Esophagus muscularis mucosa (tissue), 4 donors: ENCODE measurements at regions of chr7 and their contacts with region 1.

Region 1: GRCh38 chr7:31443457-31443856 is 70.4 kb upstream of the ITPRID1 start:
- DNase-seq: peak; percentile 39
- H3K4me3 ChIP-seq: no peak overlapping the region
- H3K27ac ChIP-seq: no peak overlapping the region
- H3K4me1 ChIP-seq: no peaks in the 10 kb centered on the region
- H3K27me3 ChIP-seq: no peaks in the 10 kb centered on the region
- CTCF ChIP-seq: peak; percentile 65 to 78 (median 72)
- EP300 ChIP-seq: no peak
- POLR2A ChIP-seq: no peak

Region 2: GRCh38 chr7:31384466-31384865 is 59.0 kb before region 1 on chr7:
- intact Hi-C with region 1: no loop called
- DNase-seq: no peak
- H3K4me3 ChIP-seq: no peak overlapping the region
- H3K27ac ChIP-seq: no peak overlapping the region
- H3K4me1 ChIP-seq: no peaks in the 10 kb centered on the region
- H3K27me3 ChIP-seq: no peaks in the 10 kb centered on the region
- CTCF ChIP-seq: no peak
- EP300 ChIP-seq: no peak
- POLR2A ChIP-seq: no peak

Region 3: GRCh38 chr7:31633894-31634494 is 190.5 kb after region 1 on chr7:
- intact Hi-C with region 1: loop called (anchors 5 kb)
- DNase-seq: no peak
- H3K4me3 ChIP-seq: no peak overlapping the region
- H3K27ac ChIP-seq: no peak overlapping the region
- H3K4me1 ChIP-seq: no peaks in the 10 kb centered on the region
- H3K27me3 ChIP-seq: no peaks in the 10 kb centered on the region
- CTCF ChIP-seq: peak; percentile 48 to 71 (median 63)
- EP300 ChIP-seq: no peak
- POLR2A ChIP-seq: no peak

Region 4: DNA sequence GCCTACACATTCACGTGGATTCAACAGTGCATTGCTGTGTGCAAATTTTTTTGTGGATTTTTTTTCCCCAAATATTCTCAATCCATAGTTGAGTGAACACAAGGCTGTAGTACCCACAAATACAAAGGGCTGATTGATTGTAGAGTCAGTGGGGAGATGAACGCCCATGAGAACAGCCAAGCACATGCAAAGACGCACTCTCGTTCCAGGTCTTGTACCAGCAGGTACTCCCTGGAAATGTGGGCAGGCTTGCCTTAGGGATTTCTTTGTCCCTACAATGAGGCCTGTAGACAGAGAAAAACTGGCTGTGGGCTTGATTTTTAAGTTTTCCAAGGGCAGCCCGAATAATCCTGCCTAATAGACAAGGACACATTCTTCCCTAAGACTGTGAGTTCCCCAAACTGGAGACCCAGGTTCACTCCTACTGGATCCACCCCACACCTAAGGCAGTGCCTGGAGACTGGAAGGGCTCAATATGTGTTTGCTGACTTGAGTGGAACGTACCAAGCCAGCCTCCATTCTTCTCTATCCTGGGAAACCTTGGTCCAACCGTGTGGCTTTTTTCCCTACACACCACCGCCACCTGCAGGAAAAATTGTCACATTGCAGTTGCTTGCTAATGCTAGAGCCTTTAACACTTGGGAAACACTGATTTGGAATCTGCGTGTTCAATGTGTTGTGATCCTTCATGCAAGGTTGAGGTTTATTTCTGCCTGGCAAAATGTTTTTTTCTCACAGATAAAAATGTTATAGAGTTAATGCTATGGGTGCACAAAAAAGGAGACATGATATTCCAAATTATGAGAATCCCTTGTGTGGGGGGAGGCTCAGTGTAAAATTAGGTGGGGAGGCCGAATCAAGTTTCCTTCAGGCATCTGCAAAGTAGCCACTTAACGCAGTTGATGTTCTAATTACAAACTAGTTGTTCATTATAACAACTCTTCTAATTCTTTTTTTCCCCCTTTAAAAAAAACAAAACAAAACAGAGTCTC is 292.8 kb after region 1 on chr7:
- intact Hi-C with region 1: loop called (anchors 10 kb)
- DNase-seq: no peak
- H3K4me3 ChIP-seq: no peak overlapping the region
- H3K27ac ChIP-seq: no peak overlapping the region
- H3K4me1 ChIP-seq: no peaks in the 10 kb centered on the region
- H3K27me3 ChIP-seq: no peaks in the 10 kb centered on the region
- CTCF ChIP-seq: peak; percentile 77 to 90 (median 79)
- EP300 ChIP-seq: no peak
- POLR2A ChIP-seq: no peak

Region 5: DNA sequence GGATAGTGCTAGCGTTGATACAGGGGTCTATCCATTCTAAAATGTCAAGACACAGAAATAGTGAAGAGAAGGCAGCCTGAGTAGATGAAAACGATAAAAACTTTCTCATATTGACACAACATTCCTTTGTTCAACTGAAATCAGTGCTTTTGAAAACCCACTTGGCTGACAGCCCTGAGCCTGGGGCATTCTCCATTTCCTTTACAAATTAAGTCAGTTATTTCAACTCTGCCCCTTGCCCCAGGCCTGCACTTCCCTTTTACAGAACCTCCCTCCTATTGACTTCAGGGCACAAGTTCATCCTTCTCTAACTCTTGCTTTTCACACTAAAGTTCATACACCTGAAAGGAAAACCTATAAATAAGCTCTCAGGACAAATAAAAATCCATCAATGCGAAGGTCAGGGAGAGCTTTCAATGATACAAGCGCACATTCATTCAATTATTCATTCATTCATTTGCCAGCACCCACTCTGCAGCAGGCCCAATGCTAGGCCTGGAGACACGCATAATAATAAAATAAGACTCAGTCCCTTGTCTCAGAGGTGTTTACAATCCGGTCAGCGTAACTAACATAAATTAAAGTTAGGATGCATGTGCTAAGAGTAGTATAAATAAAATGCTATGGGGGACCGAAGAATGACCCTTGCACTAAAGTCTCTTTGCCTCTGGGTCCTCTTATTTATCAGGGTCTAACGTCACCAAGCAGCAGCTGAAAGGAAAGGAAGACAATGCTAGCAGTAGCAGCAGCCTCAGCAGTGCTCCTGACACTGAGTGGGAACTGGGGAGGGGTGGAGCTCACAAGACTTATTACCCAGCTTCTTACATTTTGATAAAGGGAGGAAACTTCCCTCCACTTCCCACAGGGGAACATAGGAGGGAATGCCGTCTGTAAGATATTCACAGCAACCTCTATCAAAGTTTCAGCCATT is 491.9 kb after region 1 on chr7:
- intact Hi-C with region 1: no loop called
- DNase-seq: no peak
- H3K4me3 ChIP-seq: no peak overlapping the region
- H3K27ac ChIP-seq: no peak overlapping the region
- H3K4me1 ChIP-seq: peaks cover 0 to 30% (median 16%) of the 10 kb centered on the region in 4 donors
- H3K27me3 ChIP-seq: no peaks in the 10 kb centered on the region
- CTCF ChIP-seq: no peak
- EP300 ChIP-seq: no peak
- POLR2A ChIP-seq: no peak